Transverse colon (tissue), 4 donors: ENCODE measurements at regions of chr3 and their contacts with region 1.

Region 1: GRCh38 chr3:142993958-142994442 is 7.4 kb upstream of the U2SURP start:
- DNase-seq: peak; percentile 54
- H3K4me3 ChIP-seq: no peak overlapping the region
- H3K27ac ChIP-seq: no peak overlapping the region
- H3K4me1 ChIP-seq: no peaks in the 10 kb centered on the region
- H3K27me3 ChIP-seq: no peaks in the 10 kb centered on the region
- CTCF ChIP-seq: peak; percentile 52 to 65 (median 60)
- EP300 ChIP-seq: no peak
- POLR2A ChIP-seq: no peak

Region 2: DNA sequence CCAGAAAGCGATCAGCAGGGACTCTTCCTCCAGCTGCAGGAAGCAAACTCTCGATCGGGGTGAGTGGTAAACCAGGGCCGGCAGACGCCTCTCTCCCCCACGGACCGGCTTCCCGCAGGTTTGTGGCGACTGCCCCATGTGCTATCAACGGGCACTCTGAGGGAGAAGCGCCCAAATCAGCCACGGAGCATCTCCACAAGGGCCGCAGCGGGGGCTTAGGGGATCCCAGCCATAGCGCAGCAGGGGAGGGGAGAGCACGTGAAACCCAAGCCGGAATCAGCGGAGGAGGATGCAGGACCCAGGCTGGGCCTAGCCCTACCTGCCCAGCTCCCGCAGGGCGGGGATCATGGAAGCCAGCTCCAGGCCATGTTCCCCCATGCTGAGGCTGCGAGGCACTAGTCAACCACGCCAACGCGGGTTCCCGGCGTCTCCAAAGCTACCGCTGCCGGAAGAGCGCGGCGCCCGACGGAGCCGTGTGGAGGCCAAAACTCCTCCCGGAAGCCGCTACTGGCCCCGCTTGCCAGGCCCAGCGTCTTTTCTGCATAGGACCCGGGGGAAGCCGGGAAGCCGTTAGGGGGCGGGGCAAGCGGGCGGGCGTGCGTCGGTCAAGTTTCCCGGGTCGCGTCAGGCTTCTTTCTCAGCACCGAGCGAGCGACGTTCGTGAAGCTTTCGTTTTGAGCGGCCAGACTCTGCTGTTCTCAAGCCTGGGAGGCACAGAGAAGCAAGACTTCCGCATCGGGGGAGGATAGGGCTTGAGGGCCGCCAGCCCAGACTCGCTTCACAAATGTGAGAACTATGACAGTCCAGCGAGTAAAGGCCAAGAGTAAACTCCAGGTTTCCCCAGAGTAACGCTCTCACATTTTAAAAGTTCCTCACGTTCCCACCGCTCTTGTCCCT is 415.4 kb before region 1 on chr3 and contains the start of gene ATR:
- in situ Hi-C with region 1: loop called in 2 of 4 experiments (anchors 10 to 25 kb)
- intact Hi-C with region 1: no loop called
- DNase-seq: peak; percentile 98
- H3K4me3 ChIP-seq: peak within 1 kb of the TSS; percentile 65 to 93 (median 89)
- H3K27ac ChIP-seq: peak within 1 kb of the TSS; percentile 85 to 98 (median 92)
- H3K4me1 ChIP-seq: peaks cover 14 to 43% (median 23%) of the 10 kb centered on the region in 4 donors
- H3K27me3 ChIP-seq: no peaks in the 10 kb centered on the region
- CTCF ChIP-seq: peak in 1 of 5 experiments; percentile 12
- EP300 ChIP-seq: peak; percentile 44
- POLR2A ChIP-seq: peak; percentile 88
- total RNA-seq, gene ATR: 22.4 to 37.8 (median 25.3) TPM

Region 3: DNA sequence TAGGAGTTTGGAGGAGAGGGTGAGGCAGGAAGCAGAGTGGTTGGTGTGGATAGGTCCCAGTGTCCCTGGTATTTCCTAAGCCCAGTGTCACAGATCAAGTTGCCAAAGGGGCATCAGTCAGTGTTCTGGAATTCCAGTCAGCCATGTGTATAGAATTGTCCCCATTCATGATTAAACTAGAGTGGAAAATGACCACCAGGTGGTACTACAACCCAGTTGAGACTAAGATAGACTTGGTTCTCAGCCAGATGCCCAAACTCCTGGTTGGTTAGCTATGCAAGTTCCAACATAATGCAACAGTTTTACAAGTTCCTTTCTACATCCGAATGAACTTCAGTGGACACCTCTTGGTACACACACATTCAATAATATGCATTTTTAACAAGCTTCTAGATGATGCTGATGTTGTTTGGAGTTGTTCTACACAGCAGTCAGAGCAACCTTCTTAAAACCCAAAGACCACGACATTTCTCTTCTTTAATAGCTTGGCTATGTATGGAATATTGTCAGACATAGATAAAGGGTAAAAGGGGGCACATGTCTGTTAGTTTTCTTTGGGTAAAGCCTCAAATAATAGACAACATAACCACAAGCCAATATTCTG is 407.1 kb before region 1 on chr3:
- in situ Hi-C with region 1: loop called (anchors 10 to 25 kb)
- intact Hi-C with region 1: no loop called
- DNase-seq: peak; percentile 24
- H3K4me3 ChIP-seq: no peak overlapping the region
- H3K27ac ChIP-seq: no peak overlapping the region
- H3K4me1 ChIP-seq: no peaks in the 10 kb centered on the region
- H3K27me3 ChIP-seq: no peaks in the 10 kb centered on the region
- CTCF ChIP-seq: peak; percentile 58 to 72 (median 61)
- EP300 ChIP-seq: no peak
- POLR2A ChIP-seq: no peak

Region 4: GRCh38 chr3:142595951-142596725 is 397.9 kb before region 1 on chr3 and contains the start of gene PLS1:
- in situ Hi-C with region 1: loop called in 3 of 4 experiments (anchors 10 to 25 kb)
- intact Hi-C with region 1: no loop called
- DNase-seq: peak; percentile 93
- H3K4me3 ChIP-seq: peak within 1 kb of the TSS; percentile 43 to 74 (median 62)
- H3K27ac ChIP-seq: peak within 1 kb of the TSS; percentile 80 to 88 (median 82)
- H3K4me1 ChIP-seq: peaks cover 0 to 31% (median 3%) of the 10 kb centered on the region in 4 donors
- H3K27me3 ChIP-seq: no peaks in the 10 kb centered on the region
- CTCF ChIP-seq: peak in 2 of 5 experiments; percentile 33 to 35
- EP300 ChIP-seq: no peak
- POLR2A ChIP-seq: peak; percentile 91
- total RNA-seq, gene PLS1: 58.7 to 507 (median 340) TPM

Region 5: GRCh38 chr3:142828703-142829305 is 165.2 kb before region 1 on chr3:
- in situ Hi-C with region 1: loop called (anchors 10 to 25 kb)
- intact Hi-C with region 1: no loop called
- DNase-seq: peak; percentile 83
- H3K4me3 ChIP-seq: no peak overlapping the region
- H3K27ac ChIP-seq: no peak overlapping the region
- H3K4me1 ChIP-seq: no peaks in the 10 kb centered on the region
- H3K27me3 ChIP-seq: peaks cover 4% of the 10 kb centered on the region
- CTCF ChIP-seq: peak; percentile 73 to 81 (median 74)
- EP300 ChIP-seq: no peak
- POLR2A ChIP-seq: no peak

Region 6: GRCh38 chr3:143109861-143110260 is 115.9 kb after region 1 on chr3:
- in situ Hi-C with region 1: no loop called
- intact Hi-C with region 1: no loop called
- DNase-seq: no peak
- H3K4me3 ChIP-seq: no peak overlapping the region
- H3K27ac ChIP-seq: no peak overlapping the region
- H3K4me1 ChIP-seq: no peaks in the 10 kb centered on the region
- H3K27me3 ChIP-seq: no peaks in the 10 kb centered on the region
- CTCF ChIP-seq: no peak
- EP300 ChIP-seq: no peak
- POLR2A ChIP-seq: no peak